Sigmoid colon (tissue), 7 donors: ENCODE measurements at regions of chr19 and their contacts with region 1.

Region 1: DNA sequence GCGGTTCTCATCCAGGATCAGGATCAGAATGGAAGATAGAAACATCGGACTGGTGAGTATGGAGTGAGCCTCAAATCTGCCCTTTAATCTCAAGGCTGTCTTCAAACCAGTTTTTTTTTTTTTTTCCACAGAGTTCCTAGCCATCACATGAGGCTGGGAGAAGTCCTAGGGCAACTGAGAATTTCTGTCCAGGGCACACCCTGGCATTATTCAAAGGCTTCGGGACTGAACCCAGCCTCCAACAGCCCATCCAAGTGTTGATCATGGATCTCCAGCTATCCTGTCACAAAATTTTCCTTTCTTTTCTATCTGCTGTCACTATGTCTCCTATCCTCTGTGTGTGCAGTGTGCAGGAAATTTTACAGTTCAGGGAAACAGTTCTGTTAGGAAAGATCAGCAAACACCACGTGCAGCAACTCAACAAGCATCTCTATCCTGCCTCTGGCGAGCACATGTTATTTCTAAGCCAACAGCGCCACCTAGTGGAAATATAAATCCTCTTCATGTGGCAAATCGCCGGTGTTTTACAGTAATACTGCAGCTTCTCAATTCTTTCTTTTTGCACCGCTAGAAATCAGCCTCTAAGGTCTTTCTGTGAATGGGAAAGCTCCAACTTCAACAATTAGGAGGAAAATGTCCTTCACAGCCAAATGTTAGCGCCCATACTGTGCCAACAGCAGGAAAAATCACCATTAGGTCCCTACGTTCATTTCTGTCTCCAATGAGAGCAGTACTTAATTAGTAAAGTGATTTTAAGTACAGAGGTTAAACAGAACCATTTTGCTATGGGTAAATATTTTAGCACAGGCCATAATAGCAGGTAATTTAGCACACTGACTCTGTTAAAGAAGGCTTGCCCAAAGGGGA is 21.4 kb upstream of the ZNF181 start:
- DNase-seq: no peak
- H3K4me3 ChIP-seq: no peak overlapping the region
- H3K27ac ChIP-seq: no peak overlapping the region
- H3K4me1 ChIP-seq: no peaks in the 10 kb centered on the region
- H3K27me3 ChIP-seq: no peaks in the 10 kb centered on the region
- CTCF ChIP-seq: peak; percentile 51 to 80 (median 64)
- EP300 ChIP-seq: no peak
- POLR2A ChIP-seq: no peak

Region 2: GRCh38 chr19:34501339-34502320 is 211.0 kb before region 1 on chr19:
- intact Hi-C with region 1: loop called (anchors 1 kb)
- DNase-seq: peak; percentile 96
- H3K4me3 ChIP-seq: no peak overlapping the region
- H3K27ac ChIP-seq: peak overlapping the region; percentile 10 to 48 (median 46)
- H3K4me1 ChIP-seq: peaks cover 0 to 4% (median 1%) of the 10 kb centered on the region in 4 donors
- H3K27me3 ChIP-seq: no peaks in the 10 kb centered on the region
- CTCF ChIP-seq: peak; percentile 95 to 99 (median 98)
- EP300 ChIP-seq: no peak
- POLR2A ChIP-seq: no peak

Region 3: DNA sequence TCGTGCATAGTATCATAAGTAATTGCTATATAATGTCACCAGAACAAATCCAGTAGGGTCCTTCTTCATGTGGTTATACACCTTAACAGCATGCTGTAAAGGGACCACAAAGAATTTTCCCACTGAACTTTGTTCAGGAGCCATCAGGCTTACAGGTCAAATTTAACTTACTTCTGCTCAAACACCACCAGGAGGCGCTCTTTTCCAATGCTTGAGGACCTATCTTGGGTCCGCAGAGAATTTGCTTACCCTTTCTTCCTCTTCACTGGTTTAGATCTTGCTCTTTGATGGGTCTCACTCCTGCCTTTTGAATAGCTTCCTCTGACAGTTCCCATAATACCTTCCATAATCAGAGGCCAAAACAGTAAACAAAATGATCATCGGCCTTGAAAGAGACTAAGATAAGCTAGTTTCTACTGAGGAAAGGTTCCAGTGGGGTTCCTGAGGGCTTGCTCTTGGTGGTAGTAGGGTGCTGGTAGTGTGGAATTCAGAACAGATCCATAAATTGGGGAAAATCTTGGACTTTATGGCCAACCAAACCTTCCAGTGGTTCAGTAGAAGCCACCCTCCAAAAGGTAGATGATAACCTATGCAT is 73.0 kb before region 1 on chr19:
- intact Hi-C with region 1: loop called (anchors 1 kb)
- DNase-seq: no peak
- H3K4me3 ChIP-seq: no peak overlapping the region
- H3K27ac ChIP-seq: no peak overlapping the region
- H3K4me1 ChIP-seq: no peaks in the 10 kb centered on the region
- H3K27me3 ChIP-seq: no peaks in the 10 kb centered on the region
- CTCF ChIP-seq: peak; percentile 19 to 69 (median 60)
- EP300 ChIP-seq: no peak
- POLR2A ChIP-seq: no peak